ENCODE measurements at regions of chr11 and their contacts with region 1.

Region 1: DNA sequence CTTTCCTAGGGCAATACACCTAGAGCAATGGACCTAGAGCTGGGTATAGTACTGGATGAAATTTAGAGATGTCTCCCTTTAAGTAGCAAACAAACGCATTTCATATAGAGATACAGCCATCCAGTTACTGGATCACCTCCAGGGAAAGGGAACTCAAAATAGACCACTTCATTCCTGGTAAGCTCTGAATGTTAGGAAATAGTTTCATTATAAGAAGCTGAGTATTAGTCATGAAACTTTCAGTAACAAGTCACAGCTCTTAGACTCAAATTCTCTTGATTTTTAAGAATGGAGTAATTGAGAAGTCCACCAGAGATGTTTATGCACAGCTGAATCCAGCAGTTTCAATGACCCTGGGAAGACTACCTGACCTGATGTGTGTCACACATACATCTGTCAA is 221.9 kb downstream of the FAM76B start:
- DNase-seq: no peak
- H3K4me3 ChIP-seq: no peak overlapping the region
- H3K27ac ChIP-seq: peak overlapping the region; percentile 52 to 53
- H3K4me1 ChIP-seq: peaks cover 0 to 61% (median 38%) of the 10 kb centered on the region in 4 donors
- H3K27me3 ChIP-seq: no peaks in the 10 kb centered on the region
- CTCF ChIP-seq: no peak

Region 2: GRCh38 chr11:95254131-95254704 is 313.5 kb before region 1 on chr11:
- intact Hi-C with region 1: loop called (anchors 10 kb)
- DNase-seq: peak; percentile 87
- H3K4me3 ChIP-seq: peak overlapping the region; percentile 38
- H3K27ac ChIP-seq: peak overlapping the region in 1 of 2 donors; percentile 35
- H3K4me1 ChIP-seq: peaks cover 0 to 14% (median 3%) of the 10 kb centered on the region in 4 donors
- H3K27me3 ChIP-seq: no peaks in the 10 kb centered on the region
- CTCF ChIP-seq: no peak

Region 3: DNA sequence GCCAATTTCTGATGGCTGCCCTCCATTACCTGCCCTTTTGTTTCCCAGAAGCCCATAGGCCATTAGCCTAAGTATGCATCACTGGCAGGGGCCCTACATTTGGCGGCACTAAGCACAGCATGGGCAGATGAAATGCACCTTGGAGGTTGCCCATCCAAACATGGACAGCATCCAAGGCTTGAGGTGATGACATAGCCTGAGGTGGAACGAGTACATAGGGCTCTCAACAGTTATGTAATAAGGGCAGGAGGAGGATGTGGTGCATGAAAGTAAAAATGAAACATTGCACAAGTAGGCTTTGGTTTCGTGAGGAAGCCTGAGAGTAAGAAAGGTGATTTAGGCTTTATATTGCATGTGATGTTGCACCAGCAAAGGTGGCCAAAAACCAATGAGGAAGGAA is 73.8 kb after region 1 on chr11:
- intact Hi-C with region 1: loop called (anchors 10 kb)
- DNase-seq: peak; percentile 34 to 90
- H3K4me3 ChIP-seq: no peak overlapping the region
- H3K27ac ChIP-seq: peak overlapping the region; percentile 66 to 67
- H3K4me1 ChIP-seq: peaks cover 0 to 57% (median 17%) of the 10 kb centered on the region in 4 donors
- H3K27me3 ChIP-seq: no peaks in the 10 kb centered on the region
- CTCF ChIP-seq: no peak

Region 4: DNA sequence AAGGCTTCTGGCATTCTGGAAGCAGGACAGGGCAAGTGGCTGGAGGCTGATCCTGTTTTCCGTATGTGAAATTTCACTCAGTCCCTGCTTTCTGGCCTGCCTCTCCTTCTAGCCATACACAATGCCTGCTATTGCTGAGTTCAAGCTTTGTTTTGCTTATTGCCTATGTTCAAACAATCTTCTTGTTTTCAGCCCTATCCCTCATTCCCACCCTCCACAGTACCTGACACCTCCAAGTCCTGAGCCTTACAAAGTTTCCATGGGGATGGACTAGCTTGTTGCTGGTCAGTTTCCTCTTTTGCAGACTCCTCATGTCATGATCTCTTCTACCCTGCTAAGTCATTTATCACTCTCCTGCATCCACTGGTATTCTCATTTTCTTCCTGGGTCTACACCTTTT is 183.8 kb after region 1 on chr11:
- intact Hi-C with region 1: no loop called
- DNase-seq: no peak
- H3K4me3 ChIP-seq: no peak overlapping the region
- H3K27ac ChIP-seq: no peak overlapping the region
- H3K4me1 ChIP-seq: no peaks in the 10 kb centered on the region
- H3K27me3 ChIP-seq: no peaks in the 10 kb centered on the region
- CTCF ChIP-seq: no peak